Ascending aorta (tissue), 2 donors: ENCODE measurements at regions of chr6 and their contacts with region 1.

Region 1: GRCh38 chr6:161370880-161371279 is 97.0 kb upstream of the AGPAT4 start:
- DNase-seq: no peak
- H3K4me3 ChIP-seq: no peak overlapping the region
- H3K27ac ChIP-seq: no peak overlapping the region
- H3K4me1 ChIP-seq: no peaks in the 10 kb centered on the region
- H3K27me3 ChIP-seq: no peaks in the 10 kb centered on the region
- CTCF ChIP-seq: peak; percentile 58 to 83 (median 60)

Region 2: DNA sequence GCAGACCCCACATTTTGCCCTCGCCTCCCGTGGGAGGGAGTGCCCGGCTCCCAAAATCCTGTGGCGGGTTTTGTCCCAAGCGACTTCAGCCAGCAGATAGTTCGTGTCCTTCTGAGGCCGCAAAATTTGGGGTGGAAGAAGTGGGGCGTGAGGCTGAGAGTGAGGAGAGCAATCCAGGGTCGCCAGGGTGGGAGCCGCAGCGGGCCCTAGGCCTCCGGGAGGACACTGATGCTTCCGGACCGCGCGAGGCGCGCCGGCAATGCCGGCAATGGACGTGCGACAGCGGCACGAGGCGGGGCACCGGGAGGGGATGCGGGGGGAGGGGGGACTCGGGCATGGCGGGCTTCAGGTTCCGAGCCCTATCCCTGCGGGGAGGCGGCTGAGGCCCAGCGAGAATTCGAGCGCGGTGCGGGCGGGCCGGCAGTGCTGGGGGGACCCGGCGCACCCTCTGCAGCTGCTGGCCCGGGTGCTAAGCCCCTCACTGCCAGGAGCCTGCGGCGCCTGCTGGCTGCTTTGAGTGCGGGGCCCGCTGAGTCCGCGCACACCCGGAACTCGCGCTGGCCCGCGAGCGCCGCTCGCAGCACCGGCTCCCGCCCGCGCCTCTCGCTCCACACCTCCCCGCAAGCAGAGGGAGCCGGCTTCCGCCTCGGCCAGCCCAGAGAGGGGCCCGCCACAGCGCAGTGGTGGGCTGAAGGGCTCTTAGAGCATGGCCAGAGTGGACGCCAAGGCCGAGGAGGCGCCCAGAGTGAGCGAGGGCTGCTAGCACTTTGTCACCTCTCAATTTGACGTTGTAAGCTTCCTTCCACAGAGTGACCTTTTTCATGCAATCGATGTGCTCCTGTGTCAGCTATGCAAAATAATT is 850.6 kb before region 1 on chr6:
- intact Hi-C with region 1: loop called (anchors 5 kb)
- DNase-seq: peak in 1 of 2 donors; percentile 89
- H3K4me3 ChIP-seq: peak overlapping the region; percentile 63 to 93
- H3K27ac ChIP-seq: peak overlapping the region; percentile 73 to 85
- H3K4me1 ChIP-seq: no peaks in the 10 kb centered on the region
- H3K27me3 ChIP-seq: no peaks in the 10 kb centered on the region
- CTCF ChIP-seq: no peak

Region 3: DNA sequence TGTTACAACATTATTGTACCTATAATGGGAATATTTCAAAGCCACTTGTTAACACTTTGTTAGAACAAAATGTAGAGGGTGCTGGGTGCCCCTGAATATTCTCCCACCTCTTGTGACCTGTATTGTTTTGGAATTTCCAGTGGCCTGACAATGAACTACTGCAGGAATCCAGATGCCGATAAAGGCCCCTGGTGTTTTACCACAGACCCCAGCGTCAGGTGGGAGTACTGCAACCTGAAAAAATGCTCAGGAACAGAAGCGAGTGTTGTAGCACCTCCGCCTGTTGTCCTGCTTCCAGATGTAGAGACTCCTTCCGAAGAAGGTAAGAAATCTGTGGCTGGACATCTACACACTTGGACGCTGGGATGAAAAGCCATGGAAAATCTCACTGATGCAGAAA is 640.0 kb before region 1 on chr6:
- intact Hi-C with region 1: loop called (anchors 2 kb)
- DNase-seq: no peak
- H3K4me3 ChIP-seq: no peak overlapping the region
- H3K27ac ChIP-seq: no peak overlapping the region
- H3K4me1 ChIP-seq: no peaks in the 10 kb centered on the region
- H3K27me3 ChIP-seq: no peaks in the 10 kb centered on the region
- CTCF ChIP-seq: no peak

Region 4: GRCh38 chr6:160930547-160931377 is 440.1 kb before region 1 on chr6:
- intact Hi-C with region 1: loop called (anchors 1 kb)
- DNase-seq: peak; percentile 10 to 86
- H3K4me3 ChIP-seq: peak overlapping the region; percentile 59 to 67
- H3K27ac ChIP-seq: no peak overlapping the region
- H3K4me1 ChIP-seq: peaks cover 0 to 3% of the 10 kb centered on the region in 2 donors
- H3K27me3 ChIP-seq: no peaks in the 10 kb centered on the region
- CTCF ChIP-seq: peak; percentile 86 to 93 (median 88)

Region 5: GRCh38 chr6:161094955-161095354 is 275.9 kb before region 1 on chr6:
- intact Hi-C with region 1: loop called (anchors 5 kb)
- DNase-seq: no peak
- H3K4me3 ChIP-seq: no peak overlapping the region
- H3K27ac ChIP-seq: no peak overlapping the region
- H3K4me1 ChIP-seq: no peaks in the 10 kb centered on the region
- H3K27me3 ChIP-seq: no peaks in the 10 kb centered on the region
- CTCF ChIP-seq: no peak

Region 6: DNA sequence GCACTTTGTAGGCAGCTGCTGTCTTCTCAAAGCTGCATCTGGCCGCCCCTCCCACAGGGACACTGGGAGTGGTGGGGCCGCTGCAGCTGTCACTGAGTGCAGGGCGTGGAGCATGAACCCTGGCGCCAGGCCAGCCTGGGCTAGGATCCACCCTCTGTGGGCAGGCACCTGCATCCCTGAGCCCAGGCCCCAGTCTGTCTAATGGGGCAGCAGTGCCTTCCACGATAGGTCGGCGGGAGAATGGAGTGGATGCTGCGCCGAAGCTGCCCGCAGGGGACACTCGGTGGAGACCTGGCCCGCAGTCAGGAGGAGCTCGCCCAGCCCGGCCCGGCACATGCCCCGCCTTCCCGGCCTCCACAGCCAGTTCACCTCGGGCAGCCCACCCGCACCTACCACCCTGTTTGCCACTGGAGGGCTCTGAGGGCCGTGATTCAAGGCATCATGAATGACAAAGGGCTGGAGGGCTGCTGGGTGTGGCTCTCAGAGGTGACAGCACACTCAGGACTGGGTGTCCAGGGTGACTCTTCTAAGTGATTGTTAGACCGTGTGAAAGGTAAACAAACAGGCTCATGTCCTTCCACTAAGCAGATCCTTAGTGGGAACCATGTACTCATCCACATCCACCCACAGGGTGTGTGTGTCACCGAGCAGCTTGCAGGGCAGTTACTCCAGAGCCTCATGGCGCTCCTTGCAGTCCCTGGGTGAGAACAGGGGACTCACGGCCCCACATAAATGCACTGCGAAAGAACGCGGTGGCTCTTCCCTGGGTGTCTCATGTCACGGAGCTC is 230.9 kb before region 1 on chr6:
- intact Hi-C with region 1: loop called (anchors 5 kb)
- DNase-seq: peak in 1 of 2 donors; percentile 74
- H3K4me3 ChIP-seq: no peak overlapping the region
- H3K27ac ChIP-seq: no peak overlapping the region
- H3K4me1 ChIP-seq: no peaks in the 10 kb centered on the region
- H3K27me3 ChIP-seq: no peaks in the 10 kb centered on the region
- CTCF ChIP-seq: peak in 1 of 3 experiments; percentile 30